Common myeloid progenitor, CD34-positive (primary cell): ENCODE measurements at regions of chr5 and their contacts with region 1.

Region 1: GRCh38 chr5:39194466-39195136 is 24.8 kb downstream of the FYB1 start:
- DNase-seq: peak in 2 of 3 donors; percentile 42 to 62
- H3K4me3 ChIP-seq: peak overlapping the region in 1 of 7 experiments; percentile 19
- H3K27ac ChIP-seq: peak overlapping the region in 1 of 2 experiments; percentile 30
- H3K4me1 ChIP-seq: peaks cover 26 to 56% (median 44%) of the 10 kb centered on the region in 4 experiments
- H3K27me3 ChIP-seq: no peaks in the 10 kb centered on the region

Region 2: GRCh38 chr5:39177631-39177964 is 17.0 kb before region 1 on chr5:
- CTCF ChIA-PET with region 1: interaction called, 13 read pairs
- POLR2A ChIA-PET with region 1: no interaction called
- DNase-seq: peak; percentile 63 to 95 (median 91)
- H3K4me3 ChIP-seq: peak overlapping the region in 3 of 7 experiments; percentile 32 to 45 (median 37)
- H3K27ac ChIP-seq: peak overlapping the region in 1 of 2 experiments; percentile 69
- H3K4me1 ChIP-seq: peaks cover 28 to 62% (median 40%) of the 10 kb centered on the region in 4 experiments
- H3K27me3 ChIP-seq: no peaks in the 10 kb centered on the region

Region 3: DNA sequence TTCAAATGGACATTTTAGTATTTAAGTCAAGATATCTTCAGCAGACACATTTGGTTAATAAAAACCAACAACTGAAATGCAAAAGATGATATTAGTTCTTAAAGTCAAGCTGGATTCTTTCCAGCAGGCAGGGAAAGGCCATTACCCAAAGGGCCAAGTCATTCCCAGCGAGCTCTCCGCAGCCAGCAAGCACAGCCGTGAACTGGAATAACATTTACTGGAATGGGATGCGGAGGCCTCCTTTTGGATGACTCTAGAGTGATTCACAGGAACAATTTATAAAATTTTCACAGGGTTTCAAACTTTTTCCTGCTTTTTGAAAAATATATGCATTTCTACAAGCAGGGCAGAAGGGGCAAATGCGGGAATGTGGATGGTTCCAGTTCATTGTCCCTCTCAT is 306.8 kb after region 1 on chr5:
- CTCF ChIA-PET with region 1: no interaction called
- POLR2A ChIA-PET with region 1: no interaction called
- DNase-seq: no peak
- H3K4me3 ChIP-seq: no peak overlapping the region
- H3K27ac ChIP-seq: no peak overlapping the region
- H3K4me1 ChIP-seq: peaks cover 0 to 17% (median 10%) of the 10 kb centered on the region in 4 experiments
- H3K27me3 ChIP-seq: no peaks in the 10 kb centered on the region